ENCODE measurements at regions of chr2 and their contacts with region 1.

Region 1: GRCh38 chr2:98835831-98836385 is 100.1 kb downstream of the CRACDL start:
- DNase-seq: no peak
- H3K4me3 ChIP-seq: no peak overlapping the region
- H3K27ac ChIP-seq: no peak overlapping the region
- H3K4me1 ChIP-seq: no peaks in the 10 kb centered on the region
- H3K27me3 ChIP-seq: no peaks in the 10 kb centered on the region
- CTCF ChIP-seq: no peak
- POLR2A ChIP-seq: no peak

Region 2: GRCh38 chr2:98649135-98649991 is 186.5 kb before region 1 on chr2:
- intact Hi-C with region 1: loop called (anchors 2 to 5 kb)
- DNase-seq: peak; percentile 69 to 96 (median 86)
- H3K4me3 ChIP-seq: no peak overlapping the region
- H3K27ac ChIP-seq: no peak overlapping the region
- H3K4me1 ChIP-seq: no peaks in the 10 kb centered on the region
- H3K27me3 ChIP-seq: no peaks in the 10 kb centered on the region
- CTCF ChIP-seq: peak; percentile 97 to 99 (median 98)
- POLR2A ChIP-seq: no peak

Region 3: GRCh38 chr2:98975611-98976010 is 139.7 kb after region 1 on chr2:
- intact Hi-C with region 1: no loop called
- DNase-seq: no peak
- H3K4me3 ChIP-seq: no peak overlapping the region
- H3K27ac ChIP-seq: no peak overlapping the region
- H3K4me1 ChIP-seq: no peaks in the 10 kb centered on the region
- H3K27me3 ChIP-seq: no peaks in the 10 kb centered on the region
- CTCF ChIP-seq: no peak
- POLR2A ChIP-seq: no peak

Region 4: GRCh38 chr2:99079226-99079625 is 243.3 kb after region 1 on chr2:
- intact Hi-C with region 1: no loop called
- DNase-seq: no peak
- H3K4me3 ChIP-seq: no peak overlapping the region
- H3K27ac ChIP-seq: no peak overlapping the region
- H3K4me1 ChIP-seq: no peaks in the 10 kb centered on the region
- H3K27me3 ChIP-seq: no peaks in the 10 kb centered on the region
- CTCF ChIP-seq: no peak
- POLR2A ChIP-seq: no peak

Measured in adrenal gland (tissue), 19 donors.